ENCODE measurements at regions of chrX and their contacts with region 1.

Region 1: GRCh38 chrX:119468930-119469635 is 839 bp downstream of the SLC25A5 start:
- DNase-seq: peak; percentile 92
- ATAC-seq: peak; percentile 76
- H3K4me3 ChIP-seq: peak overlapping the region; percentile 8 to 88 (median 83)
- H3K4me3 Mint-ChIP-seq: peak overlapping the region; percentile 85
- H3K27ac ChIP-seq: peak overlapping the region; percentile 92 to 95
- H3K27ac Mint-ChIP-seq: peak overlapping the region; percentile 92
- H3K4me1 ChIP-seq: peaks cover 3 to 15% of the 10 kb centered on the region in 2 donors
- H3K4me1 Mint-ChIP-seq: peaks cover 8% of the 10 kb centered on the region
- H3K27me3 ChIP-seq: no peaks in the 10 kb centered on the region
- H3K27me3 Mint-ChIP-seq: no peaks in the 10 kb centered on the region
- CTCF ChIP-seq: peak; percentile 68

Region 2: DNA sequence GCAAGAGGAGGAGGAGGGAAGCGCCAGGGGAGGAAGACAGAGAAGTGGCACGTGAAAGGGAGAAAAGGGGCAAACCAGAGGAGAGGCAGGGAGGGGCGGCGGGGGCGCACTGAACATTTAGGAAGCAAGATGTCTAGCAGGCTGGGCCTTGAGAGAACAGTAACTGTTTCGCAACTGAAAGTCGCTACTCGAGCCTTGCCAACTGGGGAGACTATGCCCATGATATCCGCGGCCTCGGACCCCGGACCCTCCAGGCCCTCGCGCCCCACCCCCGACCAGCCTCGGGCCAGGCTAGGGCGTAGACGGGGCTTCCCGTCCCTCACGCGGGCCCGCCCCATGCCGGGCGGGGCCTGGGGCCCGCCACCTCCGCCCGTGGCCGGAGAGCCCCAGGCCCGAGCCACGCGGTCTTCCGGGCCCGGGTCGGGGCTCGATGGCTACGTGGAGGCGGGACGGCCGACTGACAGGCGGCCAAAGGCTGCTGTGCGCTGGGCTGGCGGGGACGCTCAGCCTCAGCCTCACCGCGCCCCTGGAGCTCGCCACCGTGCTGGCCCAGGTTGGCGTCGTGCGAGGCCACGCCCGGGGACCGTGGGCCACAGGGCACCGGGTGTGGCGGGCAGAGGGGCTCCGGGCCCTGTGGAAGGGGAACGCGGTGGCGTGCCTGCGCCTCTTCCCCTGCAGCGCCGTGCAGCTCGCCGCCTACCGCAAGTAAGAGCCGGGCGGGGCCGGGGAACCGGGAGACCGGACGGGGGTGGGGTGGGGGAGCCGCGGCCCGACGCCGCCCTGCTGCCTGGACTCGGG is 69.9 kb before region 1 on chrX and contains the start of gene SLC25A43:
- CTCF ChIA-PET with region 1: no interaction called
- POLR2A ChIA-PET with region 1: no interaction called
- intact Hi-C with region 1: loop called (anchors 2 kb)
- DNase-seq: peak; percentile 52
- ATAC-seq: peak; percentile 91
- H3K4me3 ChIP-seq: peak within 1 kb of the TSS in 4 of 5 experiments; percentile 43 to 69 (median 62)
- H3K4me3 Mint-ChIP-seq: peak within 1 kb of the TSS; percentile 92
- H3K27ac ChIP-seq: peak within 1 kb of the TSS; percentile 62 to 87
- H3K27ac Mint-ChIP-seq: peak within 1 kb of the TSS; percentile 95
- H3K4me1 ChIP-seq: peaks cover 8 to 14% of the 10 kb centered on the region in 2 donors
- H3K4me1 Mint-ChIP-seq: peaks cover 31% of the 10 kb centered on the region
- H3K27me3 ChIP-seq: no peaks in the 10 kb centered on the region
- H3K27me3 Mint-ChIP-seq: no peaks in the 10 kb centered on the region
- CTCF ChIP-seq: no peak
- total RNA-seq, gene SLC25A43: 11.1 and 11.2 TPM in 2 replicates

Region 3: GRCh38 chrX:119529345-119530276 is 60.5 kb after region 1 on chrX:
- CTCF ChIA-PET with region 1: no interaction called
- POLR2A ChIA-PET with region 1: no interaction called
- intact Hi-C with region 1: no loop called
- DNase-seq: peak; percentile 53
- ATAC-seq: peak; percentile 64
- H3K4me3 ChIP-seq: peak overlapping the region in 2 of 5 experiments; percentile 25 to 39
- H3K4me3 Mint-ChIP-seq: peak overlapping the region; percentile 46
- H3K27ac ChIP-seq: peak overlapping the region; percentile 5 to 65
- H3K27ac Mint-ChIP-seq: peak overlapping the region; percentile 76
- H3K4me1 ChIP-seq: peaks cover 9 to 21% of the 10 kb centered on the region in 2 donors
- H3K4me1 Mint-ChIP-seq: peaks cover 22% of the 10 kb centered on the region
- H3K27me3 ChIP-seq: no peaks in the 10 kb centered on the region
- H3K27me3 Mint-ChIP-seq: no peaks in the 10 kb centered on the region
- CTCF ChIP-seq: no peak

Region 4: GRCh38 chrX:119574394-119575266 is 105.5 kb after region 1 on chrX and contains the start of gene UBE2A:
- CTCF ChIA-PET with region 1: interaction called, 5 read pairs
- POLR2A ChIA-PET with region 1: interaction called, 3 read pairs
- intact Hi-C with region 1: loop called (anchors 1 kb)
- DNase-seq: peak; percentile 94
- ATAC-seq: peak; percentile 94
- H3K4me3 ChIP-seq: peak within 1 kb of the TSS; percentile 42 to 77 (median 70)
- H3K4me3 Mint-ChIP-seq: peak within 1 kb of the TSS; percentile 88
- H3K27ac ChIP-seq: peak within 1 kb of the TSS; percentile 68 to 83
- H3K27ac Mint-ChIP-seq: peak within 1 kb of the TSS; percentile 88
- H3K4me1 ChIP-seq: peaks cover 26 to 32% of the 10 kb centered on the region in 2 donors
- H3K4me1 Mint-ChIP-seq: peaks cover 34% of the 10 kb centered on the region
- H3K27me3 ChIP-seq: no peaks in the 10 kb centered on the region
- H3K27me3 Mint-ChIP-seq: no peaks in the 10 kb centered on the region
- CTCF ChIP-seq: no peak
- total RNA-seq, gene UBE2A: 67.1 and 70.9 TPM in 2 replicates

Region 5: DNA sequence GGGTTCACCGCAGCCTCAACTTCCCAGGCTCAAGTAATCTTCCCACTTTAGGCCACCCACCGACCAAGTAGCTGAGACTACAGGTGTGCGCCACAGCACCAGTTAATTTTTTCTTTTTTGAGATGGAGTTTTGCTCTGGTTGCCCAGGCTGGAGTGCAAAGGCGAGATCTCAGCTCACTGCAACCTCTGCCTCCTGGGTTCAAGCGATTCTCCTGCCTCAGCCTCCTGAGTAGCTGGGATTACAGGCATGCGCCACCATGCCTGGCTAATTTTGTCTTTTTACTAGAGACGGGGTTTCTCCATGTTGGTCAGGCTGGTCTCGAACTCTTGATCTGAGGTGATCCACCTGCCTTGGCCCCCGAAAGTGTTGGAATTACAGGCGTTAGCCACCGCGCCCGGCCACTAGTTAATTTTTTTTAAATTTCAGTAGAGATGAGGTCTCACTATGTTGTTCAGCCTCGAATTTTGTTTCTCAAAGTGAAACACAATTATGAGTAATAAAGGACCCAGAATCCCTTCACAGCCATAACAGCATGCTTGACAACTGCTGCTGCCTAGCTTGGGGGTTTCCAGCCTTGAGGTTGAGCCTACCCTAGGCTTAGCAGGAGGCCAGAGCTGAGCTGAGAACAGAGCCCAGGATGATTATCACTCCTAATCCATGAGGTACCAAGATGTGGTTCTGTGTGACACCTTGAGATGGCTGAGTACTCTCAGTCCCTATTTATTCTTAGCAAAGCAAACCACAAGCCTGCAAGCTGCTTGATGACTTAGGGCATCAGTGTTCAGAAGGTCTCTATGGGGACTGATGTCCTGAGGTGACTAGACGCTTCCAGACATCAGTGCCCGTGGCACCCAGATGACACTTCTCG is 178.7 kb after region 1 on chrX:
- CTCF ChIA-PET with region 1: no interaction called
- POLR2A ChIA-PET with region 1: no interaction called
- intact Hi-C with region 1: no loop called
- DNase-seq: peak; percentile 49
- ATAC-seq: peak; percentile 85
- H3K4me3 ChIP-seq: no peak overlapping the region
- H3K4me3 Mint-ChIP-seq: peak overlapping the region; percentile 34
- H3K27ac ChIP-seq: peak overlapping the region in 1 of 2 donors; percentile 72
- H3K27ac Mint-ChIP-seq: peak overlapping the region; percentile 89
- H3K4me1 ChIP-seq: peaks cover 25 to 31% of the 10 kb centered on the region in 2 donors
- H3K4me1 Mint-ChIP-seq: peaks cover 23% of the 10 kb centered on the region
- H3K27me3 ChIP-seq: no peaks in the 10 kb centered on the region
- H3K27me3 Mint-ChIP-seq: no peaks in the 10 kb centered on the region
- CTCF ChIP-seq: no peak

Region 6: DNA sequence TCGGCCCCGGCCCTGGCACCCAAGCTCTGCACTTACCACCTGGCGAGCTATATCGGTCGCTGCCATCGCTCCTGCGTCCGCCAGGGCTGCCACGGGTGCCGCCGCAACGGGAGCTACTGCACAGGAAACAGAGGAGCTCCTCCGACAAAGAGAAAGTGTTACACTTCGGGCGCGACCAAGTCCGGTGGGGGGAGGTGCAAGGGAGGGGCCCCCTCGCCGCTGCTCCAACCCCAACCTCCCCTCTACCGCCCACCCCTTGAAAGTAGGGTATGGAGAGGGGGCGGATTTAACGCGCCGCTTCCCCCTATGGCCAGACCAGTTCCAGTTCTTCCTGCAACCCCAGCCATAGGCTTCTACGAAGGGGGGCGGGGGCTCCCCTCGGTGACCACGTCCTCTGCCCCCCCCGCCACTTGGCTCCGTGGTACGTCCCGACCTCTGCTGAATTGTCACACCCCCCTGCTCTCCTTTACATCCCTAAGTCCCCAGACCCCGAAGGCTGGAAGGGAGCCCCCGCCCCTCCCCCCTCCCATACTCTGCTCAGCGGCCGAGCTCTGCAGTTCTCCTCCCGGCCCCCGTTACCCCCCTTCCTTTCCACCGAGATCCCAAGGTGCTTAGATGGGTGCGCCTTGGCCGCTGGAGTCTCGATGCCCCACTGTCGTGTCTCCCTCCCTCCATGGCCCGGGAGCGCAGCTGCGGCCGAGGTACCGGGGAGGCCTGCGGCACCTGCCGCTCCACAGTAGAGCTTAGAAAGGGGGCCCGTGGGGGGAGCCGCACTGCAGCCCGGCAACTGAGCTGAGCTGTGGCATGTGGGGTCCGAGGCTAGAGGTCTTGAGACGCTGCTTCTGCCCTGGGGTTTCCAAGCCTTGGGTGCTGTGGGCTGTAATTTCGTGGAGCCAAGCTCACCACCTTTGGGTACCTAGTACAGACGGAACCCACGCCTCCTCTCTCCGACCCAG is 224.2 kb after region 1 on chrX and contains the start of gene SEPTIN6:
- CTCF ChIA-PET with region 1: interaction called, 3 read pairs
- POLR2A ChIA-PET with region 1: no interaction called
- intact Hi-C with region 1: loop called (anchors 1 kb)
- DNase-seq: peak; percentile 92
- ATAC-seq: peak; percentile 66
- H3K4me3 ChIP-seq: peak within 1 kb of the TSS; percentile 69 to 78 (median 71)
- H3K4me3 Mint-ChIP-seq: peak within 1 kb of the TSS; percentile 90
- H3K27ac ChIP-seq: peak within 1 kb of the TSS; percentile 71 to 99
- H3K27ac Mint-ChIP-seq: peak within 1 kb of the TSS; percentile 91
- H3K4me1 ChIP-seq: peaks cover 68 to 77% of the 10 kb centered on the region in 2 donors
- H3K4me1 Mint-ChIP-seq: peaks cover 60% of the 10 kb centered on the region
- H3K27me3 ChIP-seq: no peaks in the 10 kb centered on the region
- H3K27me3 Mint-ChIP-seq: no peaks in the 10 kb centered on the region
- CTCF ChIP-seq: peak; percentile 6
- total RNA-seq, gene SEPTIN6: 290 and 310 TPM in 2 replicates

Region 7: DNA sequence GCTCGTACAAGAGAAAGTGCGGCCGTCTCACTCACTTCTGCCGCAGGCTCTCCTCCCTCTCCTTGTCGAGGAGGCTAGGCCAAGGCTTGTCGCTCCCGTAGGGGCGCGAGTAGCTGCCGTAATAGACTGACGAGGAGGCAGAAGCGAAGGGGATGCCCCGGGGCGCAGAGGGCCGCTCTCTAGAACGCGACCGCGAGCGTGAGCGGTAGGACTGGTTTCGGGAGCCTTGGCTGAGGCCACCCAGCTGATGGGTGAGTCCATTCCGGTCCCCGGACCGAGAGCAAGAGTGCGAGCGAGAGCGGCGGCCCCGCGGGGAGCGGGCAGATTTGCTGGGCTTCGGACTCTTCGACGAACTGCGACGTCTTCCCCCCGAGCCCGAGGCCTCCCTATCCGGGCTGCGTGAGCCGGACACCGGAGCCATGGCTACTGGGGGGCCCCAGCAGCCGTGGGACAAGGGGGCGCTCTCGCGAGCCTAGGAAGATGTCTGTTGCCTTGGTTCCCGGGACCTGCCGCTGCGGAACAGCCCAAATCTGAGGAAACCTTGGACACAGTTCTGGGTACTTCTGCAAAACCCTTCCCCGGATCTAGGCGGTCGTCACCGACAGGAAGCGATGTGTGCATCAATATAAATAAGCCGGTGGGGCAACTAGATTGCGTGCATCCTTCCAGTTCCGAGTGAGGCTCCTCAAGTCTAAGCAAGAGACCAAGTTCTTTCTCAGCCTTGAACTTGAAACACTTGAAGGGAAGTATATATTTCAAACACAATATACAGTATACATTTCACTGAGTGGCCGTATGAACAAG is 474.3 kb after region 1 on chrX and contains the start of gene NKAP:
- CTCF ChIA-PET with region 1: no interaction called
- POLR2A ChIA-PET with region 1: no interaction called
- intact Hi-C with region 1: loop called (anchors 10 kb)
- DNase-seq: peak; percentile 90
- ATAC-seq: peak; percentile 88
- H3K4me3 ChIP-seq: peak within 1 kb of the TSS; percentile 56 to 91 (median 75)
- H3K4me3 Mint-ChIP-seq: peak within 1 kb of the TSS; percentile 96
- H3K27ac ChIP-seq: peak within 1 kb of the TSS; percentile 86 to 88
- H3K27ac Mint-ChIP-seq: peak within 1 kb of the TSS; percentile 94
- H3K4me1 ChIP-seq: peaks cover 15 to 21% of the 10 kb centered on the region in 2 donors
- H3K4me1 Mint-ChIP-seq: peaks cover 18% of the 10 kb centered on the region
- H3K27me3 ChIP-seq: no peaks in the 10 kb centered on the region
- H3K27me3 Mint-ChIP-seq: peaks cover 1% of the 10 kb centered on the region
- CTCF ChIP-seq: no peak
- total RNA-seq, gene NKAP: 17.9 TPM in 2 replicates

Measured in B cell (primary cell).